CD8-positive, alpha-beta memory T cell (primary cell): ENCODE measurements at regions of chr15 and their contacts with region 1.

Region 1: DNA sequence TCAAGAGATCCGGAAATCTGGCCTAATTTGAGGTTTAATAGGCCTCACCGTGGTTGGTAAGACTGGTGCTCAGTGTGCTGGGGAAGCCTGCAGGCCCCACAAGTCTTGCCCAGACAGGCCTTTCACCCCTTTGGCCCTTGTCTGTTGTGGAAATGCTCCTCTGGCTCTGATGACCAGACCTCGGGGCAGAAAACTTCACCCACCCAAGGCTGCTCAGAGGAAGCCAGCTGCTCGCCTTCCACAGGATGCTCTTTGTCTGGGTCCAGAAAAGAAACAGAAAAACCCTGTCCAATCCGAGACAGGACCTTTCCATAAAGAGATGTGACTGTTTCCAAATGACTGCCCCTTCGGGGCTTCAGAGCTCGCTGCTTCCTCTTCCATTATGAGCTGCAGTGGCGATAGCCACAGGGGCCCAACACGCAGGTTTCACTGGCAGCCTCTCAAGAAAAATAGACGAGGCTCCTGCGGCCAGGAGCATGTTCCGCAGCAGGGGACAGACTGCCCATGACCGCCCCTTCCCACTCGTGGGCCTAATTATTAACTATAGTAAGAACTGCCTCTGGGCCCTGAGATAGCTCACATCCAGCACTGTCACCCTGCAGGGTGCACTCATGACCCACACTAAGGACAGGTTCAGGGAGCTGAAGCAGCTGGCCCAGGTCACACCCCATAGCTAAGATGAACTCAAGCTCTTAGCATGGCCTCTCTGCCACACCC is 6.8 kb upstream of the SNX22 start:
- DNase-seq: no peak
- H3K4me3 ChIP-seq: no peak overlapping the region
- H3K4me3 Mint-ChIP-seq: no peak overlapping the region
- H3K27ac ChIP-seq: no peak overlapping the region
- H3K27ac Mint-ChIP-seq: no peak overlapping the region
- H3K4me1 ChIP-seq: no peaks in the 10 kb centered on the region
- H3K4me1 Mint-ChIP-seq: peaks cover 4 to 10% (median 7%) of the 10 kb centered on the region in 3 donors
- H3K27me3 ChIP-seq: no peaks in the 10 kb centered on the region
- H3K27me3 Mint-ChIP-seq: peaks cover 0 to 1% of the 10 kb centered on the region in 2 donors

Region 2: DNA sequence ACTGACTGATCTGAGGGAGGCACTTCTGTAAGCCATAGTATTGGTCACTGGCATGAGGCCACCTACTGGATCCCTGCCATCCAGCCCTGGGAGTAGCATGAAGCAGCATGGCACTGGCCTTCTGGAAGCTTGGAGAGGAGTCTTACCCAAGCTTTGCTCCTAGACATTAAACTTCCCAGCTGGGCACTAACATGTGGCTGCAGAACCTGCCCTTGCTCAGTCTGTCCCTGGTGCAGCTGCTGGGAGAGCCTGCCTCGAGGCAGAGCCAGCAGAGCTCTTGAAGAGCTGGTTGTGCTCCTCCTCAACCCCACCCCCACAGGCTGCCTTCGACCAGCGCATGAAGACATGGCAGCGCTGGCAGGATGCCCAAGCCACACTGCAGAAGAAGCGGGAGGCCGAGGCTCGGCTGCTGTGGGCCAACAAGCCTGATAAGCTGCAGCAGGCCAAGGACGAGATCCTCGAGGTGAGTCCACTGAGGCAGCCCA is 10.3 kb before region 1 on chr15:
- CTCF ChIA-PET with region 1: interaction called, 11 read pairs
- POLR2A ChIA-PET with region 1: no interaction called
- DNase-seq: no peak
- H3K4me3 ChIP-seq: no peak overlapping the region
- H3K4me3 Mint-ChIP-seq: no peak overlapping the region
- H3K27ac ChIP-seq: no peak overlapping the region
- H3K27ac Mint-ChIP-seq: peak overlapping the region in 1 of 8 donors; percentile 54
- H3K4me1 ChIP-seq: no peaks in the 10 kb centered on the region
- H3K4me1 Mint-ChIP-seq: no peaks in the 10 kb centered on the region
- H3K27me3 ChIP-seq: no peaks in the 10 kb centered on the region
- H3K27me3 Mint-ChIP-seq: peaks cover 0 to 1% of the 10 kb centered on the region in 2 donors